ENCODE measurements at regions of chr3 and their contacts with region 1.

Region 1: DNA sequence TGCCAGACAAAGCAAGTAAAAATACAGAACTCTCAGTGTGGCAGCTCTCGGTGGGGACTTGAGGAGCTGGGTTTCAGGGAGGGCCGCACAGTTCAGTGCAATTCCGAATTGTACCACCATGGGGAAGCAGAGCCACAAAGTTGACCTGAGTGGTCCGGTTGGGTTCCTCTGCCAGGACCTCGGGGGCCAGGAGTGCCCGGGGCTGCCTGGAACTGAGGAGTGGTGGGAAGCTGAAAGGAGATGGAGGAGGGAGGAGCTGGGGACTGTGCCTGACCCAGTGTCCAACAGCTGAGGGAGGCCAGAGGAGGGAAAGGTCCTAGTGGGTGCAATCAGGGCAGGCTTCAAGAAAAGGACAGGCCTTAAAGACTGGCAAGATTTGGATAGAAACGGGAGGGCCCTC is 32.2 kb upstream of the TRH start:
- DNase-seq: peak; percentile 38
- H3K4me3 ChIP-seq: no peak overlapping the region
- H3K27ac ChIP-seq: no peak overlapping the region
- H3K4me1 ChIP-seq: no peaks in the 10 kb centered on the region
- H3K27me3 ChIP-seq: no peaks in the 10 kb centered on the region
- CTCF ChIP-seq: peak; percentile 65 to 77

Region 2: GRCh38 chr3:130093741-130094391 is 151.6 kb after region 1 on chr3:
- CTCF ChIA-PET with region 1: interaction called, 8 read pairs
- dilution Hi-C with region 1: loop called (anchors 5 kb)
- in situ Hi-C with region 1: loop called (anchors 10 kb)
- intact Hi-C with region 1: loop called (anchors 2 kb)
- DNase-seq: no peak
- H3K4me3 ChIP-seq: no peak overlapping the region
- H3K27ac ChIP-seq: no peak overlapping the region
- H3K4me1 ChIP-seq: peaks cover 10% of the 10 kb centered on the region
- H3K27me3 ChIP-seq: no peaks in the 10 kb centered on the region
- CTCF ChIP-seq: no peak

Region 3: DNA sequence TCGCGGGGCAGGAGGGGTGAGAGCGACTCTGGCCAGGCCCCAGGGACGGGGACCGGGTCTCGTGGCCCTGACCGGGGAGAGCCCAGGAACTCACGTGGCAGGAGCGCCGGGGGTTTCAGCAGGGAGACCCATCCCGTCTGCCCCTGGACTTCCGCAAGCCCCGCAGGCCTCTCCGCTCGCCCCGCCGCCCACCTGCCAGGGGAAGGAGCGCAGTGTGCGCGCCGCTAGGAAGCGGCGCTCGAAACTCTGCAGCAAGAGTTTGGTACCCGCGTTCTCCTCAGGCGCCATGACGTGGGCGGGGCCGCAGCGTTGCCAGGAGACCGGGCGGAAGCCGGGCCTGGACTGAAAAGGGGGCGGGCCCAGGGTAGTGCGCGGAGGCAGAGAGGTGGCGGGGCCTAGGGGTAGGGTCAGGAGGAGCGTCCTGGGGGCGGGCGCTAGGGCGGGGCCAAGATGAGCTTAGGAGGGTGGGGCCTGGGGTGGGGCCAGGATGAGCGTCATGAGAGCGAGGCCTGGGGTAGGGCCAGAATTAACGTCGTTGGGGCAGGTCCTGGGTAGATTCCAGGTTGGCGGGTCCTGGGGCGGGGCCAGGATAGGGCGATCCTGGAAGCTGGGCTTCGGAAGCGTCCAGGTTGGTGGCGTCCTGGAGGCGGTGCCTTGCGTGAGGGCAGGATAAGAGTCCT is 169.0 kb after region 1 on chr3:
- CTCF ChIA-PET with region 1: interaction called, 4 read pairs
- dilution Hi-C with region 1: no loop called
- in situ Hi-C with region 1: no loop called
- intact Hi-C with region 1: loop called (anchors 1 kb)
- DNase-seq: peak; percentile 98
- H3K4me3 ChIP-seq: peak overlapping the region; percentile 72 to 79 (median 76)
- H3K27ac ChIP-seq: peak overlapping the region; percentile 90
- H3K4me1 ChIP-seq: peaks cover 4% of the 10 kb centered on the region
- H3K27me3 ChIP-seq: no peaks in the 10 kb centered on the region
- CTCF ChIP-seq: no peak

Region 4: DNA sequence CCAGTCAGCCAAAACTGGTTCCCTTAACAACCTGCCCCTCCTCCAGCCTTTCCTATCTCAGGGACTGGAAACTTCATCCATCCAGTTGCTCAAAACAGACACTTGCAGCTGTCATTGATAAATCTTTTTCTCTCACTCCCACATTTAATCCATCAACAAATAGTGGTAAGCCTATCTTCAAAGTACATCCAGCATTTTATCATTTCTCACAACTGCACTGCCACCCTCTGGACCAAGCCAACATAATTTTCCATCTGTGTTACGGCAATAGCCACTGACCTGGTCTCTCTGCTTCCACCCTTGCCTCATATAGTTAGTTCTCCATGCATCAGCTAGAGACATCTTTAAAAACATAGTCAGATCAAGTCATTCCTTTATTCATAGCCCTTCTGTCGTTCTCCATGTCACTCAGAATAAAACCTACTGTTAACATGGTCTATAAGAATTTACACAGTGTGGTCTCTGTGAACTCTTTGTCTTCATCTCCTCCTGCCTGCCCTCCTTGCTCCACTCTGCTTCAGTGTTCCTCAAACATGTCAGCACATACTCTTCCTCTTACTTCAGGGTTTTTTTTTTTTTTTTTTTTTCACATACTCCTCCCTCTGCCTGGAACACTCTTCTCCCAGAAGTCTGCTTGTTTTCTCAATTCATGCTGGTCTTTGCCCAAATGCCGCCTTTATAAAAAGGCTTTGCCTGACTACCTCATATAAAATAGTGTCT is 300.7 kb after region 1 on chr3:
- CTCF ChIA-PET with region 1: no interaction called
- dilution Hi-C with region 1: no loop called
- in situ Hi-C with region 1: no loop called
- intact Hi-C with region 1: loop called (anchors 5 kb)
- DNase-seq: peak; percentile 8
- H3K4me3 ChIP-seq: no peak overlapping the region
- H3K27ac ChIP-seq: no peak overlapping the region
- H3K4me1 ChIP-seq: no peaks in the 10 kb centered on the region
- H3K27me3 ChIP-seq: no peaks in the 10 kb centered on the region
- CTCF ChIP-seq: peak in 1 of 2 donors; percentile 43

Region 5: DNA sequence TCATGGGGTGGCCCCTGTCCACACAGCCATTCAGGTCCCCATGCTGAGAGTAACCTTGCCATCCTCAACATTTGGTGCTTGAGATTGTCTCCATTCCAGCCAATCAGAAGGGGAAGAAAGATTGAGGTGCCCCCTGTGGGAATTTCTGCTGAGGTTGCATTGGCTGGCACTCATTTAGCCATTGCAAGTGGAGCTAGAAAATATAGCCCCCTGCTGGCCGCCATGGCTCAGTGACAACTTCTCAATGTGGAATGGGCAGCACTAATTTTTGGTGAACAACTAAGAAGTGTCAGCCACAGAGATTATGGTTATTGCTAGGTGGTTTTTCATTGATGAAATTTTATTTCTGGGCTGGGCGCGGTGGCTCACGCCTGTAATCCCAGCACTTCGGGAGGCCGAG is 596.7 kb after region 1 on chr3:
- CTCF ChIA-PET with region 1: no interaction called
- dilution Hi-C with region 1: no loop called
- in situ Hi-C with region 1: no loop called
- intact Hi-C with region 1: loop called (anchors 5 kb)
- DNase-seq: peak; percentile 19
- H3K4me3 ChIP-seq: no peak overlapping the region
- H3K27ac ChIP-seq: no peak overlapping the region
- H3K4me1 ChIP-seq: no peaks in the 10 kb centered on the region
- H3K27me3 ChIP-seq: no peaks in the 10 kb centered on the region
- CTCF ChIP-seq: peak; percentile 78

Measured in mammary epithelial cell (primary cell).